Dendritic cell treated with granulocyte-macrophage colony-stimulating factor and Interleukin-4, amounts not matched to agents 40 ng/mL and 50 ng/mL, for 4 days (primary cell): ENCODE measurements at regions of chr16 and their contacts with region 1.

Region 1: GRCh38 chr16:1469693-1470201 is 5.1 kb downstream of the CLCN7 start:
- H3K4me3 Mint-ChIP-seq: peak overlapping the region; percentile 84
- H3K27ac Mint-ChIP-seq: peak overlapping the region; percentile 93
- H3K4me1 Mint-ChIP-seq: peaks cover 67% of the 10 kb centered on the region
- H3K27me3 Mint-ChIP-seq: no peaks in the 10 kb centered on the region

Region 2: DNA sequence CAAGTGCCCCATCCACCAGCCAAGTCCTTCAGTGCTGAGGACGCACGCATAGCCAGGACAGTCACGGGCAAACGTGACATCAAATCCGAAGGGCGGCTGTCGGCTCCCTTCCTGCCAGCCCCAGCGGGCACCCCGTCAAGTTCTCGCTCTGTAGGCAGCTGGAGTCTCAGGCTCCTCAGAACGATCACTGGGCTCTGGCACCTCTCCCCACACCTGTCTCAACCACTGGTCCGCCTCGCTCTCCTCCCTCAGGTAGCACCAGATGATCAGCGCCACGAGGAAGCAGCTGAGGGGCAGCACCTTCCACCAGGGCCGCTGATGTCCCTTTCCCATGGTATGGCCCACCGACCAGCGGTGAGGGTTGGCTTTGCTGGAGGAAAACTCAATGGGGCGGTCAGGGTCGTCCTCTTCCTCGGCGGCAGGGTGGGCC is 49.6 kb before region 1 on chr16:
- intact Hi-C with region 1: loop called (anchors 2 kb)
- H3K4me3 Mint-ChIP-seq: peak overlapping the region; percentile 87
- H3K27ac Mint-ChIP-seq: peak overlapping the region; percentile 100
- H3K4me1 Mint-ChIP-seq: peaks cover 38% of the 10 kb centered on the region
- H3K27me3 Mint-ChIP-seq: no peaks in the 10 kb centered on the region